ENCODE measurements at regions of chr17 and their contacts with region 1.

Region 1: GRCh38 chr17:49031965-49032928 is 35.1 kb downstream of the IGF2BP1 start:
- DNase-seq: peak; percentile 59
- H3K4me3 ChIP-seq: no peak overlapping the region
- H3K27ac ChIP-seq: no peak overlapping the region
- H3K4me1 ChIP-seq: peaks cover 11% of the 10 kb centered on the region
- H3K27me3 ChIP-seq: no peaks in the 10 kb centered on the region
- CTCF ChIP-seq: peak; percentile 87 to 90

Region 2: DNA sequence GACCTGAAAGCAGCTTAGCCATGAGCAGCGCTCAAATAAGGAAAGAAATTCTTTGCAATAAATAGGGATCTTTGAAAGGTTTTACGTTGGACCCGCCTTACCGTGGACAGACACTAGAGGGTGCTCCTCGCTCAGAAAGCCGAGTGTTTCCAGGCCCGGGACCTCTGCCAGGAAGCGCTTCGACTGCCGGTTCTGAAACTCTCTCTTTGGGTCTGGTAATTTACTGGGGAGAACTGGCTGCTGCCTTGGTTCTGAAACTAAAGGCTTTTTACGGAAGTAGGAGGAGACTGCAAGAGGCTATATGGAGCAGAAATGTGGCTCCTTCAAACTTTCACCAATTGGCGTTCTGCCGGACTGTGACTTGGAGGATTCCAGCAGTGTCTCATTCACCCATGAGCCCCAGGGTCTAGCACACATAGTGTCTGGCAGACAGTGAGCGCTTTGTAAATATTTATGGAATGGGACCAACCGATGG is 360.5 kb before region 1 on chr17:
- CTCF ChIA-PET with region 1: interaction called, 3 read pairs
- dilution Hi-C with region 1: no loop called
- in situ Hi-C with region 1: no loop called
- intact Hi-C with region 1: loop called (anchors 2 kb)
- DNase-seq: peak; percentile 46
- H3K4me3 ChIP-seq: peak overlapping the region; percentile 40 to 55 (median 49)
- H3K27ac ChIP-seq: no peak overlapping the region
- H3K4me1 ChIP-seq: no peaks in the 10 kb centered on the region
- H3K27me3 ChIP-seq: no peaks in the 10 kb centered on the region
- CTCF ChIP-seq: peak; percentile 76 to 93

Region 3: GRCh38 chr17:48724251-48725003 is 307.8 kb before region 1 on chr17:
- CTCF ChIA-PET with region 1: no interaction called
- dilution Hi-C with region 1: no loop called
- in situ Hi-C with region 1: loop called in 1 of 2 experiments (anchors 25 kb)
- intact Hi-C with region 1: loop called (anchors 2 kb)
- DNase-seq: peak; percentile 51
- H3K4me3 ChIP-seq: no peak overlapping the region
- H3K27ac ChIP-seq: no peak overlapping the region
- H3K4me1 ChIP-seq: no peaks in the 10 kb centered on the region
- H3K27me3 ChIP-seq: peaks cover 83% of the 10 kb centered on the region
- CTCF ChIP-seq: peak; percentile 54 to 76

Region 4: DNA sequence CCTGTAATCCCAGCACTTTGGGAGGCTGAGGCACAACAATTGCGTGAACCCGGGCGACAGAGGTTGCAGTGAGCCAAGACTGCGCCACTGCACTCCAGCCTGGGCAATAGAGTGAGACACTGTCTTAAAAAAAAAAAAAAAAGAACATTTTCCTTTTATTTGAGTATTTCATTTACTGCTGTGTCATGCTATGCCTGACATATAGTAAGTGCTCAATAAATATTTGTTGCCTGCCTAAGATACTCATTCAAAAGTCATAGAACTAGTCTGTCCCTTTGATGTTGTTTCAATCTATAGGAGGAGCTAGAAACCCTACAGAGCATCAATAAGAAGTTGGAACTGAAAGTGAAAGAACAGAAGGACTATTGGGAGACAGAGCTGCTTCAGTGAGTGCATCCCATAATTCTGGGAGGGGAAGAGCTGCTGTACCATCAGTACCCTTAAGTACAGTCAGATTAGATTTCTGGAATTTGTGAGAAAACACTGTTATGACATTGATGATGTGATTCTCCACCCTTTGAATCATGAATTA is 181.4 kb before region 1 on chr17:
- CTCF ChIA-PET with region 1: no interaction called
- dilution Hi-C with region 1: no loop called
- in situ Hi-C with region 1: no loop called
- intact Hi-C with region 1: no loop called
- DNase-seq: no peak
- H3K4me3 ChIP-seq: no peak overlapping the region
- H3K27ac ChIP-seq: no peak overlapping the region
- H3K4me1 ChIP-seq: no peaks in the 10 kb centered on the region
- H3K27me3 ChIP-seq: no peaks in the 10 kb centered on the region
- CTCF ChIP-seq: no peak

Region 5: GRCh38 chr17:48878918-48879898 is 153.0 kb before region 1 on chr17:
- CTCF ChIA-PET with region 1: interaction called, 11 read pairs
- dilution Hi-C with region 1: no loop called
- in situ Hi-C with region 1: loop called (anchors 10 to 25 kb)
- intact Hi-C with region 1: loop called (anchors 1 kb)
- DNase-seq: peak; percentile 48
- H3K4me3 ChIP-seq: no peak overlapping the region
- H3K27ac ChIP-seq: no peak overlapping the region
- H3K4me1 ChIP-seq: no peaks in the 10 kb centered on the region
- H3K27me3 ChIP-seq: no peaks in the 10 kb centered on the region
- CTCF ChIP-seq: peak; percentile 94 to 98

Region 6: GRCh38 chr17:48944519-48945260 is 87.6 kb before region 1 on chr17 and contains the start of gene SNF8:
- CTCF ChIA-PET with region 1: no interaction called
- dilution Hi-C with region 1: no loop called
- in situ Hi-C with region 1: loop called in 1 of 2 experiments (anchors 5 kb)
- intact Hi-C with region 1: loop called (anchors 1 kb)
- DNase-seq: peak; percentile 86
- H3K4me3 ChIP-seq: peak within 1 kb of the TSS; percentile 82 to 86 (median 84)
- H3K27ac ChIP-seq: peak within 1 kb of the TSS; percentile 79
- H3K4me1 ChIP-seq: peaks cover 11% of the 10 kb centered on the region
- H3K27me3 ChIP-seq: no peaks in the 10 kb centered on the region
- CTCF ChIP-seq: no peak
- total RNA-seq, gene SNF8: 50.5 to 89.6 TPM

Region 7: GRCh38 chr17:48997083-48997826 is 35.0 kb before region 1 on chr17 and contains the start of gene IGF2BP1:
- CTCF ChIA-PET with region 1: no interaction called
- dilution Hi-C with region 1: no loop called
- in situ Hi-C with region 1: no loop called
- intact Hi-C with region 1: no loop called
- DNase-seq: no peak
- H3K4me3 ChIP-seq: peak within 1 kb of the TSS in 2 of 3 experiments; percentile 30 to 42
- H3K27ac ChIP-seq: no peak within 1 kb of the TSS
- H3K4me1 ChIP-seq: peaks cover 9% of the 10 kb centered on the region
- H3K27me3 ChIP-seq: peaks cover 67% of the 10 kb centered on the region
- CTCF ChIP-seq: no peak
- total RNA-seq, gene IGF2BP1: 0.17 TPM in 1 of 2 donors, not detected in the other

Region 8: GRCh38 chr17:49093082-49093741 is 61.0 kb after region 1 on chr17:
- CTCF ChIA-PET with region 1: no interaction called
- dilution Hi-C with region 1: no loop called
- in situ Hi-C with region 1: no loop called
- intact Hi-C with region 1: no loop called
- DNase-seq: no peak
- H3K4me3 ChIP-seq: no peak overlapping the region
- H3K27ac ChIP-seq: no peak overlapping the region
- H3K4me1 ChIP-seq: no peaks in the 10 kb centered on the region
- H3K27me3 ChIP-seq: no peaks in the 10 kb centered on the region
- CTCF ChIP-seq: no peak

Region 9: DNA sequence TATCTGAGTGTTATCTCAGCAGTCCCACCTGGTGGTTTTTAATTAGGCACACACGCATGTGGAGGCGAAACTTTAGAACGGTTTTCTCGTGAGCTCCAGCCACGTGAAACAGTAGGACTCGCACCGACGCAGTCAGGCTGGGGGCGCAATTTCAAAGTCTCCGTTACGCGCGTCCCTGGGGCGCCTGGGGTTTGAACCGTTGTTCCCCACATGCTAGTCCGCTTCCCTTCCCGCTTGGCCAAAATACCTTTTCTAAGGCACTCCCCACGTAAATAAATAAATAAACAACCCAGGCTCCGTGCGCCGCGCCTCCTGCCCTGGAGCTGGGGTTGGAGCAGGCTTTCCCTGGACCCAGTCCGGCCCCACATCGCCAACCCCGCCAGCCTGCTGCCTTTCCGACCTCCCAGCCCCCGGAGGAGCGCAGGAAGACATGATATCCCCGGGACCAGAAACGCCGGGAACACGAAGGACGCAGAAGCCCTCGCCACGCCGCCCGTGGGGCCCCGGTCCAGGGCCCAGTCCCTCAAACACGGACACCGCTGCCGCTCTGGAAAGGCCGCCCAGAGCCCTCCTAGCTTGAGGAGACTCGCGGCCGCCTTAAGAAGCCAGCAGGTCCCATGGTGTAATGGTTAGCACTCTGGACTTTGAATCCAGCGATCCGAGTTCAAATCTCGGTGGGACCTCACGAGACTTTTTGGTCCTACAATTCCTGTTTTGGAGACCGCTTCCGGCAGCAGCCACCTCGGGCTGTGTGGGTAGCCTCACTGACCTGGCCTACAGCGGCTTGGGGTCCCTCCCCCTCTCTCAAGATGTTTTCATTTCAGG is 159.9 kb after region 1 on chr17:
- CTCF ChIA-PET with region 1: no interaction called
- dilution Hi-C with region 1: no loop called
- in situ Hi-C with region 1: no loop called
- intact Hi-C with region 1: loop called (anchors 1 kb)
- DNase-seq: peak; percentile 92
- H3K4me3 ChIP-seq: peak overlapping the region; percentile 71 to 78 (median 74)
- H3K27ac ChIP-seq: peak overlapping the region; percentile 81
- H3K4me1 ChIP-seq: peaks cover 4% of the 10 kb centered on the region
- H3K27me3 ChIP-seq: no peaks in the 10 kb centered on the region
- CTCF ChIP-seq: peak in 1 of 2 donors; percentile 30